ENCODE measurements at regions of chr3 and their contacts with region 1.

Region 1: GRCh38 chr3:138068579-138069174 is 46.7 kb downstream of the DZIP1L start:
- DNase-seq: peak; percentile 93
- H3K4me3 Mint-ChIP-seq: no peak overlapping the region
- H3K27ac Mint-ChIP-seq: no peak overlapping the region
- H3K4me1 Mint-ChIP-seq: peaks cover 12% of the 10 kb centered on the region
- H3K27me3 Mint-ChIP-seq: peaks cover 23% of the 10 kb centered on the region

Region 2: GRCh38 chr3:138082085-138082991 is 13.7 kb after region 1 on chr3:
- intact Hi-C with region 1: loop called (anchors 1 kb)
- DNase-seq: peak; percentile 72
- H3K4me3 Mint-ChIP-seq: peak overlapping the region; percentile 36
- H3K27ac Mint-ChIP-seq: peak overlapping the region; percentile 45
- H3K4me1 Mint-ChIP-seq: peaks cover 38% of the 10 kb centered on the region
- H3K27me3 Mint-ChIP-seq: peaks cover 2% of the 10 kb centered on the region

Region 3: DNA sequence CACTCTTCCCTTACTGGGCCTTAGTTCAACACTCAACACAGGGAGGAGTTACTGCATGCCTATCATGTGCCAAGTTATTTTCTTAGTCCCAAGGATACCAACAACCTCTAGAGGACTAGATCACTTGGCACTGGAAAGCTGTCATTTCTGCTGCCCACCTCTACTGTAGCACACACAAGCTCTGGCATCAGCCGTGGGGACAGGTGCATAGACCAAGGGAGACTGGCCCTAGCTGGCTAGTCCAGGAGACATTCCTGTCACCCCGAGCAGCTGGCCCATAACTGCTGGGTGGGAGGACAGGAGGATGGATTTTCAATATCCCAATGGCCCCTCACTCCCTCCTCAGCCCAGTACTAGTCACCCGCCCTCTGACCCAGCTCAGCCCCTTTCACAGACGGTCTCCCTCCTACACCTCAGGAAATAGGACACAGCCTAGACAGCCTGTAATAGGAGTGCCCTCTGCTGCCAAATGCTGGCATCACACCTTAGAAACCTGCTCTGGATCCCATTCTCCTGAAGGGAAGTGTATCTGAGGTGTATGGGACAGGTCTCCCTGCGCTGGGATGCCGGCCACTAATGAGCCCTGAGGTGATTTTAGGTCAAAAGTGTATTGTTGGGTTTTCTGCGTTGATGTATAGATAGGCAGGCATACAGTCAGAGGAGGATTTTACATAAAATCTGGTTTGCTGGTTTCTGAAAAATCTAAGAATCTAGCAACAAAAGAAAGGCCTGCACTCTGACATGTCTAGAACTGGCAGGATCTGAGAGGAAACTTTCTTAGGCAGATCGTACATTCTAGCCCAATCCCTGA is 50.1 kb after region 1 on chr3:
- intact Hi-C with region 1: loop called (anchors 1 kb)
- DNase-seq: peak; percentile 88
- H3K4me3 Mint-ChIP-seq: no peak overlapping the region
- H3K27ac Mint-ChIP-seq: no peak overlapping the region
- H3K4me1 Mint-ChIP-seq: peaks cover 8% of the 10 kb centered on the region
- H3K27me3 Mint-ChIP-seq: peaks cover 44% of the 10 kb centered on the region

Region 4: DNA sequence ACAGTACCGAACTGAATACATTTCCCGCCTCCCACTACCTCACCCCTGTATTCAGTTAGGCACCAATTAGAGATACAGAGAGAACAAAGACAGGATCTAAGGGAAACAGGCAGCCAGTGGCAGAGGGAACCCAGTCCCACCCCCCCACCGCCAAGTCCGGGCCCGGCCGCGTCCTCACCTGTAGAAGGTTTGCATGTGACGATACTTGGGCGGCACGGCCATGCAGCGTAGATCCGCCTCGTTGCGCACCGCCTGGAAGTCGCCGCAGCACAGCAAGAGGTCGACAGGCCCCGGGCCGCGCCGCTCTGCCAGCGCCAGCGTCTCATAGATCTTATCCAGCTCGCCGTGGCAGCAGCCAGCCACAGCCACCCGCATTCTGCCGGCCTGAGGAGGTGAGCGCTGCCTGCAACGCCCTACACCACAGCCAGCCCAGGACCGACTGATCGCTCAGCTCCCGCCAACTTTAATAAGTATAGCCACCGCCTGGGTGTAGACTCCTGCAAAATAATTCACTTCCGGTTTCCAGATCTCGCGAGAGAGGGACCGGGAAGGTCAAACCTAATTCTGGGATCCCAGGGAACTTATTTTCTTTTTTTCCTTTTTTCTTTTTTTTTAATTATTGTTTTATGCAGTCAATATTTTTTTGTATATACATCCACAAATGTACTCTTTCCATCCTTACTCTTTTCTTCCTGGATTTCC is 105.9 kb after region 1 on chr3 and contains the start of gene DBR1:
- intact Hi-C with region 1: loop called (anchors 5 kb)
- DNase-seq: peak; percentile 93
- H3K4me3 Mint-ChIP-seq: peak within 1 kb of the TSS; percentile 98
- H3K27ac Mint-ChIP-seq: peak within 1 kb of the TSS; percentile 94
- H3K4me1 Mint-ChIP-seq: peaks cover 29% of the 10 kb centered on the region
- H3K27me3 Mint-ChIP-seq: peaks cover 3% of the 10 kb centered on the region
- total RNA-seq, gene DBR1: 27.3 and 28.3 TPM in 2 replicates

Region 5: GRCh38 chr3:138329127-138329983 is 260.7 kb after region 1 on chr3 and contains the start of gene NME9:
- intact Hi-C with region 1: loop called (anchors 5 kb)
- DNase-seq: peak; percentile 96
- H3K4me3 Mint-ChIP-seq: peak within 1 kb of the TSS; percentile 91
- H3K27ac Mint-ChIP-seq: peak within 1 kb of the TSS; percentile 89
- H3K4me1 Mint-ChIP-seq: peaks cover 23% of the 10 kb centered on the region
- H3K27me3 Mint-ChIP-seq: no peaks in the 10 kb centered on the region
- total RNA-seq, gene NME9: not detected in 2 replicates

Region 6: GRCh38 chr3:138923531-138923994 is 854.9 kb after region 1 on chr3:
- intact Hi-C with region 1: loop called (anchors 10 kb)
- DNase-seq: peak; percentile 95
- H3K4me3 Mint-ChIP-seq: no peak overlapping the region
- H3K27ac Mint-ChIP-seq: no peak overlapping the region
- H3K4me1 Mint-ChIP-seq: peaks cover 5% of the 10 kb centered on the region
- H3K27me3 Mint-ChIP-seq: peaks cover 17% of the 10 kb centered on the region